Heart left ventricle (tissue), 16 donors: ENCODE measurements at regions of chr6 and their contacts with region 1.

Region 1: DNA sequence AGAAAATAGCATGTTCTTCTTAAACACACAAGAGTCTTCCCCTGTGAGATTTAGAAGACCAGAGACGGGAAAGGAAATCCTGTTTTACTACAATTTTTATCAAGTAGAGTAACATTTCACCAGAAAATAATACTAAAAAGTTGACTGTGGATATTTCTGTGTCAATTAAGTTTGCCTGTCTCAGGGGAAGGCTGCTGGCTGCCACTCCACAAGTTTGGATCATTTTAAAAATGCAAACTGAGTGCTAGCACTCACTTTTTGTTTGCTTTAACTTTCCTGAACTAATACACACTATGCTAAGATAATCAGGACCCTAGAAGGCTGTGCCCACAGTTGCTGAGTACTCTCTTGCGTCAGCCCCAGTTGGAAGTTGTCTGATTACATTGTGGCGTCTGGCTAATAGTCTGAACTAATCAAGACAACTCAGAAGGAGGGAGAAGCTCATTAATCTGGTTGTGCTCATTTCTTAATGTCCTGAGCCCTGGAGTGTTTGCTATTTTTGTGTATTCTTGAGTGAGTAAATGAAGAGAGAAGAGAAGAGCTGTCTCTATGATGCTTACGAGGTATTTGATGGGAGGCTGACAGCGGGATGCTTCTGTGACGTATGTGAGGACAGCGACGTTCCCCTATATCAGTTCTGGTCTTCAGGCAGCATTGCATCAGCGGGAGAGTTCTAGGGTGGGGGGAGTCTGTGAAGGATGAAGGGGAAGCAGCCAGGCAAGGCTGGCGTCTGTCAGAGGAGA is 664.2 kb downstream of the QKI start:
- DNase-seq: no peak
- ATAC-seq: peak in 3 of 4 donors; percentile 45 to 62 (median 48)
- H3K4me3 ChIP-seq: no peak overlapping the region
- H3K27ac ChIP-seq: peak overlapping the region in 4 of 12 donors; percentile 6 to 43 (median 33)
- H3K4me1 ChIP-seq: peaks cover 0 to 15% (median 8%) of the 10 kb centered on the region in 12 donors
- H3K27me3 ChIP-seq: no peaks in the 10 kb centered on the region
- CTCF ChIP-seq: no peak
- POLR2A ChIP-seq: no peak

Region 2: DNA sequence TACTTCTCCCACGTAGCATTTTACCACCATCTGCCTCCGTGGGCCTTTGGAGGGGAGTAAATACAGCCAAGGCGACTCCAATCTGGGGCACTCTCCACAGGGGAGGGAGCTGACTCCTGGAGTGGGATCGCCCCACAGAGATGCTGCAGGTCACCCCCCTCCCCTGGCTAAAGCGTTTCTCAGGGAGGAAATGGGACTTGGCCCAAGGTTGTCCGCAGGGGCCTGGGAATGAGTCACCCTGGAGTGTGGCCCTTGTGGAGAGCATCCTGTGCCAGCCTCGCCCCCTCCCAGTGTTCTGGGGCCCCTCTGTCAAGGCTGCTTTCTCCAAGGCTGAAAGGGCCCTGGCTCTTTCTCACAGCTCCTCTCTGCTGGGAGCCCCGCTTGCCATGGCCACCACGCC is 748.7 kb before region 1 on chr6:
- intact Hi-C with region 1: loop called in 1 of 10 experiments (anchors 5 kb)
- DNase-seq: no peak
- ATAC-seq: peak in 1 of 4 donors; percentile 16
- H3K4me3 ChIP-seq: no peak overlapping the region
- H3K27ac ChIP-seq: no peak overlapping the region
- H3K4me1 ChIP-seq: peaks cover 5 to 44% (median 21%) of the 10 kb centered on the region in 12 donors
- H3K27me3 ChIP-seq: no peaks in the 10 kb centered on the region
- CTCF ChIP-seq: no peak
- POLR2A ChIP-seq: no peak

Region 3: GRCh38 chr6:164227952-164228522 is 149.3 kb after region 1 on chr6:
- intact Hi-C with region 1: no loop called
- DNase-seq: no peak
- ATAC-seq: no peak
- H3K4me3 ChIP-seq: no peak overlapping the region
- H3K27ac ChIP-seq: no peak overlapping the region
- H3K4me1 ChIP-seq: no peaks in the 10 kb centered on the region
- H3K27me3 ChIP-seq: no peaks in the 10 kb centered on the region
- CTCF ChIP-seq: no peak
- POLR2A ChIP-seq: no peak